ENCODE measurements at regions of chr5 and their contacts with region 1.

Region 1: GRCh38 chr5:176415952-176416924 is at the start of gene CLTB:
- DNase-seq: peak; percentile 74
- ATAC-seq: peak; percentile 98
- H3K4me3 ChIP-seq: peak within 1 kb of the TSS; percentile 75 to 85 (median 83)
- H3K27ac ChIP-seq: peak within 1 kb of the TSS; percentile 30
- H3K4me1 ChIP-seq: peaks cover 32% of the 10 kb centered on the region
- H3K27me3 ChIP-seq: no peaks in the 10 kb centered on the region
- CTCF ChIP-seq: peak; percentile 83
- EP300 ChIP-seq: no peak
- POLR2A ChIP-seq: peak in 1 of 2 experiments; percentile 32; a peak in 1 of 4 replicates
- RAD21 ChIP-seq: peak; percentile 100
- total RNA-seq, gene CLTB: 30.7 and 33.8 TPM in 2 replicates

Region 2: GRCh38 chr5:176436661-176437071 is 20.4 kb after region 1 on chr5:
- CTCF ChIA-PET with region 1: no interaction called
- POLR2A ChIA-PET with region 1: no interaction called
- in situ Hi-C with region 1: no loop called
- intact Hi-C with region 1: no loop called
- DNase-seq: peak; percentile 55
- ATAC-seq: 0 out of 3 replicates have a peak, but pooled peaks have one; percentile 14
- H3K4me3 ChIP-seq: peak overlapping the region in 2 of 3 experiments; percentile 9 to 37; a peak in 2 of 6 replicates
- H3K27ac ChIP-seq: peak overlapping the region; percentile 15
- H3K4me1 ChIP-seq: peaks cover 73% of the 10 kb centered on the region
- H3K27me3 ChIP-seq: no peaks in the 10 kb centered on the region
- CTCF ChIP-seq: no peak
- EP300 ChIP-seq: no peak
- POLR2A ChIP-seq: no peak
- RAD21 ChIP-seq: no peak

Region 3: DNA sequence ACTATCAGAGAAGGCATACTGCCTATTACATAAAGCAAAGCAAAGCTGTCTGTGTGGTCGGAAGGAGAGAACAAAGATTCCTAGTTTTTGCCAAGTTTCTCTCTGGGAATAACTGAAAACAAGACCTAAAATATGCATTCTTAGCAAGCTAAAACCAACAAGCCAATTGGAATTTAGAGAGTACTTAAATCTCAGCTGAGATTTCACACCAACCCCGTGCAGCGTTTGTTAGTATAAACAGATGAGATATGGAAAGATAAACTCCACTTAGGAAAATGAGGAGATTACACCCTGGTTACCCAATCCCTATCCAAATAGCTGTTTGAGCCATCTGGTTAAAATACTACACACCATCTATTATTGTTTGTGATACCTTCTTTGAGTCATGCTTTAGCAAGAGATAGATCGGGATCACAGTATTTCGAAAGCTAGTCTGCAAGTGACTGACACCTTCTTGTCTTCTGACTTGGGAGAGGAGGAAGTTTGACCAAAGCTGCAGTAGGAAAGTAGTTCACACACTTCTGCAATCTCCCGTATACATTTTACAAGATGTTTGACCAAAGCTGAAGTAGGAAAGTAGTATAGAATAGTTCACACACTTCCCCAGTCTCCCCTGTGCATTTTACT is 50.1 kb after region 1 on chr5:
- CTCF ChIA-PET with region 1: no interaction called
- POLR2A ChIA-PET with region 1: no interaction called
- in situ Hi-C with region 1: no loop called
- intact Hi-C with region 1: no loop called
- DNase-seq: peak; percentile 56
- ATAC-seq: peak; percentile 74
- H3K4me3 ChIP-seq: no peak overlapping the region
- H3K27ac ChIP-seq: peak overlapping the region; percentile 29
- H3K4me1 ChIP-seq: peaks cover 22% of the 10 kb centered on the region
- H3K27me3 ChIP-seq: no peaks in the 10 kb centered on the region
- CTCF ChIP-seq: no peak
- EP300 ChIP-seq: no peak
- POLR2A ChIP-seq: no peak
- RAD21 ChIP-seq: no peak

Region 4: DNA sequence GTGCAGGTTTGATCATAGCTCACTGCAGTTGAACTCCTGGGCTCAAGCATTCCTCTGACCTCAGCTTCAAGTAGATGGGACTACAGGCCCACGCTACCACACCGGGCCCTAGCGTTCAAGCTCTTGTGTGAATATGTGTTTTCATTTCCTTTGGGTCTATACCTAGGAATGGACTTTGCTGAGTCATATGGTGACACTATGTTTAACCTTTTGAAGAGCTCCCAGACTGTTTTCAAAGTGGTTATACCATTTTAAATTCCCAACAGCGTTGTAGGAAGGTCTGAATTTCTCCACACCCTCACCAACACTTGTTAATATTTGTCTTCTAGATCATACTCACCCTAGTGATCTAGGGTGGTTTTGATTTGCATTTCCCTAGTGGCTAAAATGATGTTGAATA is 65.5 kb after region 1 on chr5:
- CTCF ChIA-PET with region 1: no interaction called
- POLR2A ChIA-PET with region 1: interaction called, 3 read pairs
- in situ Hi-C with region 1: loop called (anchors 10 kb)
- intact Hi-C with region 1: loop called (anchors 10 kb)
- DNase-seq: peak; percentile 71
- ATAC-seq: peak; percentile 90
- H3K4me3 ChIP-seq: no peak overlapping the region
- H3K27ac ChIP-seq: peak overlapping the region; percentile 25
- H3K4me1 ChIP-seq: peaks cover 10% of the 10 kb centered on the region; the same call in 1 of the 2 replicates
- H3K27me3 ChIP-seq: no peaks in the 10 kb centered on the region
- CTCF ChIP-seq: no peak
- EP300 ChIP-seq: no peak
- POLR2A ChIP-seq: no peak
- RAD21 ChIP-seq: no peak

Region 5: GRCh38 chr5:176537608-176538504 is 121.6 kb after region 1 on chr5:
- CTCF ChIA-PET with region 1: no interaction called
- POLR2A ChIA-PET with region 1: interaction called, 15 read pairs
- in situ Hi-C with region 1: loop called (anchors 5 kb)
- intact Hi-C with region 1: no loop called
- DNase-seq: peak; percentile 98
- ATAC-seq: peak; percentile 67
- H3K4me3 ChIP-seq: peak overlapping the region; percentile 90 to 98 (median 97)
- H3K27ac ChIP-seq: peak overlapping the region; percentile 95
- H3K4me1 ChIP-seq: peaks cover 69% of the 10 kb centered on the region
- H3K27me3 ChIP-seq: no peaks in the 10 kb centered on the region; a peak in 1 of 5 replicates
- CTCF ChIP-seq: no peak
- EP300 ChIP-seq: 0 out of 4 replicates have a peak, but pooled peaks of 1 of the 2 experiments have one; percentile 20
- POLR2A ChIP-seq: peak in 1 of 2 experiments; percentile 74; a peak in 2 of 4 replicates
- RAD21 ChIP-seq: 0 out of 2 replicates have a peak, but pooled peaks have one; percentile 6

Region 6: GRCh38 chr5:176543428-176544173 is 127.4 kb after region 1 on chr5:
- CTCF ChIA-PET with region 1: no interaction called
- POLR2A ChIA-PET with region 1: interaction called, 15 read pairs
- in situ Hi-C with region 1: loop called (anchors 5 kb)
- intact Hi-C with region 1: loop called (anchors 2 kb)
- DNase-seq: no peak
- ATAC-seq: peak; percentile 39
- H3K4me3 ChIP-seq: peak overlapping the region; percentile 66 to 77 (median 72)
- H3K27ac ChIP-seq: no peak overlapping the region
- H3K4me1 ChIP-seq: peaks cover 86% of the 10 kb centered on the region
- H3K27me3 ChIP-seq: no peaks in the 10 kb centered on the region
- CTCF ChIP-seq: 0 out of 2 replicates have a peak, but pooled peaks have one; percentile 6
- EP300 ChIP-seq: no peak
- POLR2A ChIP-seq: no peak
- RAD21 ChIP-seq: no peak

Region 7: DNA sequence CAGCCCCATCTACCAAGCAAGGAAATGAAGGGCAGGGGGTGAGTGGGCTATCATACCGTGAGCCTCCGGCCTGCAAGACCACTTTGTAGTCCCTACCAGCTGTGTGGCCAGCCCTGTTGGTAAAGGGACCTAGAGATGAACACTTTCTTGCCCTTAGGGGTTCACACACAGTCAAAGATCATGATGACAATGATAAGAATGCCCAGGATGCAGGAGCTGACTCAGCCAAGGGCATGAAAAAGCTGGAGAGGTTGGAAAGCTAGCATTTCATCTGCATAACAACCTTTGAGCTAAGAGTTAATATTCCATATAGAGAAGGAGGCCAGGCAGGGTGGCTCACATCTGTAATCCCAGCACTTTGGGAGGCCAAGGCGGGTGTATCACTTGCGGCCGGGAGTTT is 651.3 kb after region 1 on chr5:
- CTCF ChIA-PET with region 1: no interaction called
- POLR2A ChIA-PET with region 1: no interaction called
- in situ Hi-C with region 1: no loop called
- intact Hi-C with region 1: no loop called
- DNase-seq: no peak
- ATAC-seq: no peak
- H3K4me3 ChIP-seq: no peak overlapping the region
- H3K27ac ChIP-seq: no peak overlapping the region
- H3K4me1 ChIP-seq: peaks cover 11% of the 10 kb centered on the region
- H3K27me3 ChIP-seq: no peaks in the 10 kb centered on the region
- CTCF ChIP-seq: no peak
- EP300 ChIP-seq: no peak
- POLR2A ChIP-seq: no peak
- RAD21 ChIP-seq: no peak

Region 8: DNA sequence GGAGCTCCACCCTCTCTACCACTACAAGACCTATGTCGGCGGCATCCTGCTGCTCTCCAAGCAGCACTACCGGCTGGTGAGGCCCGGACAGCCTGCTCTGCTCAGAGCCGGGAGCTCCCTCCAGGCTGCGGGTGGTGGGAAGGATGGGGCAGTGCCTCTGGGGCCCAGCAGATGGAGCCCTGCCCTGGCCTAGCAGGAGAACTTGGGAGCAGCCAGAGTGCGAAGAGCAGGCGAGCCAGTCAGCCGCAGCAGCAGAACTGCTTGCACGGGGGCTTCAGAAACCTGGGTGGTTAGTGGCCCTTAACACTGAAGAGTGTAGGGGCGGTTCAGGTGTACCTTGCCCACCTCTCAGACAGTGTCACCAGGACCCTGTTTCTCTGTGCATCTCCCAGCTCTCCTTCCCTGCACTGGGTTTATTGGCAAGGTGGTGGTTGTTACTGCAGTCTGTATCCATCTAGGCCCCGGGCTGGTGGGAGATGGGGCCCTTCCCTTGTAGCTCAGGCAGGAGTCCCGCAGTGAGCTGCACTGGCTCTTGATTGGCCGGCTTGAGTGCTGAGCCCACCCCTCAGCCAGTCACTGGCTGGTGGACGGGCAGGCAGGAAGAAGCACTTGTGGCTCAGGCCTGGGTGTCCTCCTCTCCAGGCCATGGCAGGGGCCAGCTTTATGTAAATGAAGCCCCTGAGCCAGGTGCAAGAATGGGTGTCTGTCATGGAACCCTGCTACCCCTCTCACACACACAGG is 1191.4 kb after region 1 on chr5:
- CTCF ChIA-PET with region 1: no interaction called
- POLR2A ChIA-PET with region 1: no interaction called
- in situ Hi-C with region 1: no loop called
- intact Hi-C with region 1: no loop called
- DNase-seq: peak; percentile 58
- ATAC-seq: peak; percentile 94
- H3K4me3 ChIP-seq: no peak overlapping the region
- H3K27ac ChIP-seq: no peak overlapping the region
- H3K4me1 ChIP-seq: peaks cover 9% of the 10 kb centered on the region
- H3K27me3 ChIP-seq: no peaks in the 10 kb centered on the region
- CTCF ChIP-seq: peak; percentile 98
- EP300 ChIP-seq: no peak
- POLR2A ChIP-seq: no peak
- RAD21 ChIP-seq: peak; percentile 87

Measured in HepG2 (cell line).